Heart right ventricle (tissue), 16 donors: ENCODE measurements at regions of chr5 and their contacts with region 1.

Region 1: GRCh38 chr5:62460578-62460983 is 48.0 kb downstream of the IPO11 start:
- DNase-seq: no peak
- ATAC-seq: peak in 5 of 8 donors; percentile 43 to 69 (median 53)
- H3K4me3 ChIP-seq: no peak overlapping the region
- H3K27ac ChIP-seq: no peak overlapping the region
- H3K4me1 ChIP-seq: peaks cover 0 to 3% (median 0%) of the 10 kb centered on the region in 9 donors
- H3K27me3 ChIP-seq: no peaks in the 10 kb centered on the region
- CTCF ChIP-seq: peak; percentile 55 to 91 (median 83)

Region 2: GRCh38 chr5:62111428-62111827 is 349.2 kb before region 1 on chr5:
- intact Hi-C with region 1: no loop called
- DNase-seq: no peak
- ATAC-seq: no peak
- H3K4me3 ChIP-seq: no peak overlapping the region
- H3K27ac ChIP-seq: no peak overlapping the region
- H3K4me1 ChIP-seq: no peaks in the 10 kb centered on the region
- H3K27me3 ChIP-seq: peaks cover 0 to 5% (median 0%) of the 10 kb centered on the region in 7 donors
- CTCF ChIP-seq: no peak

Region 3: GRCh38 chr5:62475072-62475471 is 14.5 kb after region 1 on chr5:
- intact Hi-C with region 1: no loop called
- DNase-seq: no peak
- ATAC-seq: no peak
- H3K4me3 ChIP-seq: no peak overlapping the region
- H3K27ac ChIP-seq: no peak overlapping the region
- H3K4me1 ChIP-seq: peaks cover 0 to 7% (median 0%) of the 10 kb centered on the region in 9 donors
- H3K27me3 ChIP-seq: no peaks in the 10 kb centered on the region
- CTCF ChIP-seq: no peak

Region 4: DNA sequence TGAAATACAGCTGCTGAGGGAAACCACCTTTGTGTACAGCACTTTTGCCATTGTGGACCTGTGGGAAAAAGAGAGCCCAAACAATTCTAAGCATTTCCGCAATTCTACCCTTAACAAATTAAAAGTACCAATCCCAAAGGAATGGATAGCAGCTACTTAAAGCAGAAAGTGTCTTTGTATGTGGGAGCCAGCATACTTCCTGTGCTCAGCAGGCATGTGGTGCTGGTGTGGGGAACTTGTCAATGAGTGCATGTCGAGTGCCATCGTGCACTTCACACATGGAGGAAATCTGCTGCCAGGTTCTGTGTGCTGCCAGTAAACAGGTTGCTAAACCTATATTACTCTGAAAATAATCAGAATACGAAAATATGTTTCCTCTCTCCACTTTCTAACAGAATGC is 517.1 kb after region 1 on chr5:
- intact Hi-C with region 1: loop called in 1 of 10 experiments (anchors 10 kb)
- DNase-seq: no peak
- ATAC-seq: no peak
- H3K4me3 ChIP-seq: no peak overlapping the region
- H3K27ac ChIP-seq: no peak overlapping the region
- H3K4me1 ChIP-seq: peaks cover 0 to 9% (median 0%) of the 10 kb centered on the region in 9 donors
- H3K27me3 ChIP-seq: no peaks in the 10 kb centered on the region
- CTCF ChIP-seq: no peak